OCI-LY7 (cell line): ENCODE measurements at regions of chr7 and their contacts with region 1.

Region 1: GRCh38 chr7:123748734-123749536 is at the start of gene WASL:
- DNase-seq: peak; percentile 93
- H3K4me3 ChIP-seq: peak within 1 kb of the TSS; percentile 98
- H3K27ac ChIP-seq: peak within 1 kb of the TSS; percentile 82
- H3K4me1 ChIP-seq: peaks cover 34% of the 10 kb centered on the region
- CTCF ChIP-seq: no peak
- total RNA-seq, gene WASL: 3.4 and 4.4 TPM in 2 replicates

Region 2: GRCh38 chr7:123534383-123535260 is 214.3 kb before region 1 on chr7 and contains the start of gene IQUB:
- CTCF ChIA-PET with region 1: no interaction called
- POLR2A ChIA-PET with region 1: no interaction called
- intact Hi-C with region 1: loop called (anchors 2 kb)
- DNase-seq: peak; percentile 95
- H3K4me3 ChIP-seq: peak within 1 kb of the TSS; percentile 70
- H3K27ac ChIP-seq: peak within 1 kb of the TSS; percentile 48
- H3K4me1 ChIP-seq: no peaks in the 10 kb centered on the region
- CTCF ChIP-seq: no peak
- total RNA-seq, gene IQUB: 0.09 and 0.15 TPM in 2 replicates

Region 3: DNA sequence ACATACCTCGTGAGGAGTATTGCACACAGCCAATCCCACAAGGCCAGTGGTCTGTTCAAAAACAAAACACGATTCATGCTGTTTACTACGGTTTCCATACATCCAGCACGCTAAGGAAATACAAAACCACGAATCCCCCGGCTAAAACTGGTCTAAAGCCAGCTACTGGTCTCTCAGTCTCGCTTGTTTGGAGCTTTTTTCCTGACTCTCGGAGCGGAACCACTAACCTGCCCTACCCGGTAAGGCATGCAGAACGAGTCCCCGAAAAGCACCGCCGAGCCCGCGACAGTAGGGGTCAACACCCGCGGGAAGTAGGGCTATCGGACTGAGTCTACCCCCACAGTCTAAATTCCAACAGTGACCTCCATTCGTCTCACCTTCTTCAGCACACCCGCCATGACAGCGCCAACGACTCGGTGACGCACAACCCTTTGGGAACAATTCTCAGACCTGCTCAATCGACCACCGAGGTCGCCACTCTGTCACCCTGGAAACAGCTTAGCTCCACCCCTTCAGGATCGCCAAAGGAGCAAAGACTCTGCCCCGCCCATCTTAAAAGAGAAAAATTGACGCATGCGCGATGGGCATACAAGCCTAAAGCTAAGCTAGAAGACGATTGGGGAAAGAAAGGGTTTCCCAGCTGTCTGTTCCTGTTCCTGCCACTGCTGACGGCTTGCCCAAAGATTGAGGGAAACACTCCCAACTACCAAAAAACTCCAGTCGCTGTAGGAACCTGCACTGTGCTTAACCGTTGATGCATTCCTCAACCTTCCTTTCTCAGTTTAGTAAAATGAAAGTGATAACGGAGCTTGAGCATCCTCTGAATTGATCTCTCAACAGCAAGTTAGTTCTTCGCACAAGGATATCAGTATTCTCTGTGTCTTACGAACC is 191.3 kb before region 1 on chr7 and contains the start of gene NDUFA5:
- CTCF ChIA-PET with region 1: no interaction called
- POLR2A ChIA-PET with region 1: interaction called, 11 read pairs
- intact Hi-C with region 1: loop called (anchors 5 kb)
- DNase-seq: peak; percentile 99
- H3K4me3 ChIP-seq: peak within 1 kb of the TSS; percentile 92
- H3K27ac ChIP-seq: peak within 1 kb of the TSS; percentile 49
- H3K4me1 ChIP-seq: peaks cover 15% of the 10 kb centered on the region
- CTCF ChIP-seq: no peak
- total RNA-seq, gene NDUFA5: 42.6 and 50.8 TPM in 2 replicates

Region 4: DNA sequence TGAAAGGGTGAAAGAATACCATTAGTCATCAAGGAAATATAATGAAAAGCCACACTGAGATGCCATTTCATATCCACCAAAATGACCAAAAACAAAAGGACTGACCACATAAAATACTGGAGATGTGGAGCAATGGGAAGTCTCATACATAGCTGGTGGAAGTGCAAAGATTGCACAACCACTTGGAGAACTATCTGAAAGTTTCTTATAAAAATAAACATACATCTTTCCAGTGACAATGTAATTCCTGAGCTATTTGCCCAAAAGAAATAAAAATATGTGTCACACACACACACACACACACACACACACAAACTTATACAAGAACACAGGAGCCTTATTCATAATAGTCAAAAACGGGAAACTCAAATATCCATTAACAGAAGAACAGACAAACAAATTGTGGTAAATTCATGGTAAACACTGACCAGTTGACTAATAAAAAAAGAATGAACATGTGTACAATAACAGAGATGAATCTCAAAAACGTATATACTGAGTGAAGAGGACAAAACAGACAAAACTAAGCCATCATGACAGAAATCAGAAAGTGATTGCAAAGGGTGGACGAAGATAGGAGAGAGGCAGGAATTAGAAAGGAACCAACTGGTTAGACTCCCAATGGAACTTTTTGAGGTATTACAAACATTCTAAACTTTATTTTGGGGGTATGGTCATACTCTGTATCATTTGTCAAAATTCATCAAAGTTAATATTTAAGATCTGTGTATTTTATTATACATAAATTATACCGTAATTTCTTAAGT is 21.7 kb before region 1 on chr7:
- CTCF ChIA-PET with region 1: no interaction called
- POLR2A ChIA-PET with region 1: interaction called, 11 read pairs
- intact Hi-C with region 1: no loop called
- DNase-seq: no peak
- H3K4me3 ChIP-seq: no peak overlapping the region
- H3K27ac ChIP-seq: no peak overlapping the region
- H3K4me1 ChIP-seq: peaks cover 22% of the 10 kb centered on the region
- CTCF ChIP-seq: no peak

Region 5: GRCh38 chr7:123738356-123738755 is 10.6 kb before region 1 on chr7:
- CTCF ChIA-PET with region 1: no interaction called
- POLR2A ChIA-PET with region 1: interaction called, 13 read pairs
- intact Hi-C with region 1: no loop called
- DNase-seq: no peak
- H3K4me3 ChIP-seq: no peak overlapping the region
- H3K27ac ChIP-seq: no peak overlapping the region
- H3K4me1 ChIP-seq: no peaks in the 10 kb centered on the region
- CTCF ChIP-seq: no peak

Region 6: DNA sequence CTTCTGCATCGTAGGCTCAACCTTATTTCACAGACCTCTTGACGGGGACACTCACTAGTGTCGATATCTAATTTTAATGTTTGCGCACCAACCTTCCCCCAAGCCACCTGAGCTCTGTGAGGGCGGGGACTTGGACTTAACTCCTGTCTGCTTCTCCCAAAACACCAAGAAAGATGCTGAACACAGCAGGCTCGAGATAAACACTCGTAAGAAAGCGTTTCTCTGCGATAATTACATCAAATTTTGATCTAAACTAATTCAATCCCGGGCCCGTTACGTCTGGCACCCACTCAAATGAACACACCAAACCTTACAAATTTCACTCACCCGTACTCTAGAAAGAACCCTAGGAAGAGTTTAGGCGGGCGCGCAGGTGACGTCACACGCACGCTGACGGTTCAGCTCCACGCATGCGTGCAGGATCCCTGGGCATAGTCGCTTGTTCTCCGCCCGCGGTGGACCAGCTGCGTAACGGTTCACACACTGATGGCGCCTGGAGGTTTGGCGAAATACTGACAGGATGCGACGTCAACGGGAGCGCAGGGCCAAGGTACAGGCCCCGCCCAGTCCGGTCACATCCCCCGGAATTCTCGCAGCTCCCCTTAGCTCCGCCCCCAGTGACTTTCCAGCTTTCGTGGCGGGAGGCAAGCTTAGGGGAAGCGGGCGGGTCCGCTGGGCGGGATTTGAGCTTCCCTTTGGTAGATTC is 1180.7 kb after region 1 on chr7 and contains the start of gene POT1:
- CTCF ChIA-PET with region 1: no interaction called
- POLR2A ChIA-PET with region 1: no interaction called
- intact Hi-C with region 1: loop called (anchors 10 kb)
- DNase-seq: peak; percentile 98
- H3K4me3 ChIP-seq: peak within 1 kb of the TSS; percentile 77
- H3K27ac ChIP-seq: peak within 1 kb of the TSS; percentile 67
- H3K4me1 ChIP-seq: peaks cover 7% of the 10 kb centered on the region
- CTCF ChIP-seq: no peak
- total RNA-seq, gene POT1: 29.4 and 46.5 TPM in 2 replicates